Mucosa of descending colon (tissue), 3 donors: ENCODE measurements at regions of chr12 and their contacts with region 1.

Region 1: GRCh38 chr12:81644503-81644902 is 114.6 kb downstream of the PPFIA2 start:
- DNase-seq: peak in 1 of 3 donors; percentile 9
- ATAC-seq: no peak
- H3K4me3 ChIP-seq: no peak overlapping the region
- H3K4me1 ChIP-seq: no peaks in the 10 kb centered on the region
- CTCF ChIP-seq: no peak

Region 2: DNA sequence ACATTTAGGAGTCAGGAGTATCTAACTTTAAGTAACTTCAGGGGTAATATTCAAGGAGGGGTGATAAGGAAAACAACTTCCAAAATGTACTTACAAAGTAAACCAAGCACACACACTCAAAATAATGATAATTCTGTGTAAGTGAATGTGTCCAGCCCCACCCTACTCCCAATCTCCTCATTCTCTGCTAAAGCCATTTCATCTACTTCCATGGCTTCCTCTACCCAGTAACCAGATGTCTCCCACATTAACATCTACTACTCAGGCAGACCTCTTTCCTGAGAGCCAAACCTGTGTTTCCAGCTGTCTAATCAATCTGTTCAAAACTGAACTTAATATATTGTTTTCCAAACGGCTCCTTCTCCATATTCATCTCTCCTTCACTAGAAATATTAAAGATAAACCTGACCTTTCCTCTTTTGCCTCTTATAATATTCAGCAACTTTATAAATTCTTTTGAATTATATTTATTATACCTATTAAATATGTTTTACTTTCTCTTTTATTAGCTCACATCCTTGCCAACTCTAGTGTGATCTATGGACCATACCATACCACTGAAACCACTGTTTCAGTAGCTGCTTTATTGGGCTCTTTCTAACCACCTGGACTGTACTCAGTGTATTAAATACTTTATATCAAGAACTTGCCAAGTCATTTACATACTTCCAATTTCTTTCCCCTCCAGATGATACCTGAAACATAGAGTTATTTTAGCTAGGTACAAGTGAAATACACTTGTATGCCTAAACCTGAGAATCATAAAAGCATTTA is 56.1 kb before region 1 on chr12:
- intact Hi-C with region 1: no loop called
- DNase-seq: no peak
- ATAC-seq: no peak
- H3K4me3 ChIP-seq: no peak overlapping the region
- H3K4me1 ChIP-seq: no peaks in the 10 kb centered on the region
- CTCF ChIP-seq: no peak

Region 3: DNA sequence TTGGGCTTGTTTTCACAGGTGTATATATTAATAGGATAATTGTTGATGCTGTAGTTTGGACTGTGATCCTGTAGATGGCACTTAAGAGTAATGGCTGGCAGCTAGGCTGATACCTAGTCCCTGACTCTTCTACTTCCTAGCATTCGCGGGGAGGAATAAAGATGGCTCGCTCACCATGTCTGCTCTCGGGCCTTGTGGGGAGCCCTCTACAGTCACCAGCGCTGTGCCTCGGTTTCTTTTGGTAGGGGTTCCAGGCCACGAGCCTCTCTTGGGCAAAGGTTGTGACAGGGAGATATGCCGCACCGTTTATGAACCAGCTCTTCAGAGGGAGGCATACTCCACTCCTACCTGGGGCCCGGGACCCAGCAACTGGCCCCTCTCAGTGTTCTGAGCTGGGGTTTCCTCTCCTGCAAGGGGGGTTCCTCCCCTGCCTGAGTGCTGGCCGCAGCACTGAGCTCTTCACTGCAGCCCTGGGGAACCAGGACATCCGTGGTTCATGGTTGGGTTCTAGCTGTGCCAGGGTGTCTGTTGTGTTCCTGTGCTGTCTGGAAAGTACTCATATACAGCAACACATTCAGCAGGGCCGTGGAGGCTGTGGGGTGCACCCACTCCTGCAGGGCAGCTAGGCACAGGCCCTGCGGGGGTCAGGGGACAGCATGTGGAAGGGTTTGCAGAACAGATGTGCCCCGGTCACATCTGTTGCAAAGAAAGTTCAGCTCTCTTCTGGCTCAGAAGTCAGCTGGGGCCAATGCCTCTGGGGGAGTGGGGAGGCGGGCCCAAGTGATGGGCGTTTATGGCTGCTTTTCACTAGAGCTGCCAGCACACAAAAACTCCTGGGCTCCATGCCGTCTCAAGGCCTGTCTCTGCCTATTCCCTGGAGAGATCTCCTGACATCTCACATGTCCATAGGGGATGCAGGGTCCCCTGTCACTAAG is 33.3 kb before region 1 on chr12:
- intact Hi-C with region 1: no loop called
- DNase-seq: no peak
- ATAC-seq: no peak
- H3K4me3 ChIP-seq: no peak overlapping the region
- H3K4me1 ChIP-seq: no peaks in the 10 kb centered on the region
- CTCF ChIP-seq: no peak

Region 4: DNA sequence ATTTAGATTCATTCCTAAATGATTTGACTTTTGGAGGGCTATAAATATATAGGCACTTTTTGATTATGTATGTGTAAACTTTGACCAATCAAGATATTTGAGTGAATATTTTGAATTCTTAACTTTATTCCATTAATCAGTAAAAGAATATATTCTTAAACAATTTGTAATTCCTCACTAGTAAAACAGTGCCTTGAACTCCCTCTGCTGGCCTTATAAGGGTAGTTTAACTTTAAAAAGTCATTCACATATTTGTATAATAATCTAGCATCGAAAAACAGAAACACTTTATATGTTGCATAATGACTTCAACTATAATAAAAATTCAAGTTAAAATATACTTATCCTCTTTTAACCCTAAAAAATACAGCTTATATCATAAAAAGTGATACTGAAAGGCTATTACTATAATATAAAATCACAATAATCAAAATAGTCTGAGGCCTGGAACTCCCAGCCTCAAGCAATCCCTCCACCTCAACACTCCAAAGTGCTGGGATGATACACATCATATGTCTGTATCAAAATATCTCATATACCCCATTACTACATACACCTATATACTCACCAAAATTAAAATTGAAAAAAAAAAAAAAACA is 682.5 kb after region 1 on chr12:
- intact Hi-C with region 1: loop called in 1 of 2 experiments (anchors 10 kb)
- DNase-seq: no peak
- ATAC-seq: no peak
- H3K4me3 ChIP-seq: no peak overlapping the region
- H3K4me1 ChIP-seq: peaks cover 4% of the 10 kb centered on the region
- CTCF ChIP-seq: peak; percentile 15